HAP-1 (cell line): ENCODE measurements at regions of chr5 and their contacts with region 1.

Region 1: DNA sequence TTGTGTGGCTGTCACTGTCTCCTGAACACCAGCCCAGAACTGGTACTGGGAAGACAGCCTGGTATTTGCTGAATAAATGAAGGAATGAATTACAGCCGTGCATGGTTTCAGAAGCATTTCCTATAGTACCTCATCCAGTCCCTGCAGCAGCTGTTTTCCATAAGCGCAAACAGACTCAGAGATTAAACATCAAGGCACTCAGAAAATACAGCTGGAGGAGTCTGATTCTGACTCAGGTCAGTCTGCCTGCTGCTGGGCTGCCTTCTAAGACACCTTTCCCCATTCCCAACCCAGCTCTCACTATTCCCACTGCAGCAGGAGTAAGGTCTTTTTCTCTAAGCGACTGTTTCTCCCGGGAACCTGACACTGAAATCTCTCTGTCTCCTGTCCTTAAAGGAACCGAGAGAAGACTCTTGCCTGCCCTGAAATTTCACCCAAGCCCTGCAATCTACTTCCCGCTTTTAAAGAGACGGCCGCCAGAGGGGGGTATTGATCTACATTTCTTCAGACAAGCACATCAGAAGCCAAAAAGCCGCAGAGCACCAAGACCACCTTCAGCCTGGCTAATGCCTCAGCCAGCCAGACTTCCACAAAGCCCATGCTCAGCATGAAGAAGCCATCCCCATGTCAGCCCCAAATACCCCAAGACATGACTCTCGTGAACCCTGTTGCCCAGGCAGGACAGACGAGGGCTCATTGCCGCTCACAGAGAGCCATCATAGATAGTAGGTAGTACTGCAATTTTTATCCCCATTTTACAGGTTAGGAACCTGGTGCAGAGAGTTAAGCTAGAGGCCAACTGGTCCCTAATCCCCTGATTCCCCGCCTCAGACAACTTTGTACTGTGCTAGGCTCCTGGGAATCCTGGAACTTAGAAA is 5.4 kb upstream of the FOXI1 start:
- DNase-seq: peak; percentile 74 to 87
- H3K4me3 ChIP-seq: no peak overlapping the region
- H3K4me1 ChIP-seq: no peaks in the 10 kb centered on the region
- H3K27me3 ChIP-seq: no peaks in the 10 kb centered on the region

Region 2: DNA sequence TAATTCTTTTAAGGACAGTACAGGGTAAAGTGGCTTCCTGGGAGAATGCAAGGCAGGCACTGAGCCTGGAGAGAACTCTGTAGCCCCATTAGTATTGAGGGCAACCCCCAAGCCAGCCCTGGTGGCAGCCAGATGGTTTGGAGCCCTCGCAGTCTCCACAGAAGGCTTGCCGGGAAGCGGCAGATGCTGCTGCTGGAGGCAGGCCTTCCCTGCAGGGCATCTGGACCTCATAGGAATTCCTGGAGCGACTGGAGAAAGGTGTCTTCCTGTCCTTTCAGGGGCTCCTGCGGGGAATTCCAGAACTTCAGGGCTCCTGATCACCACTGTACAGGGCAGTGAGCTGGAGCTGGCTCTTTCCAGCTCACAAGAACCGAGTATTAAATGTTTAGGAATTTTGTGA is 287.5 kb before region 1 on chr5:
- in situ Hi-C with region 1: no loop called
- DNase-seq: no peak
- H3K4me3 ChIP-seq: no peak overlapping the region
- H3K4me1 ChIP-seq: no peaks in the 10 kb centered on the region
- H3K27me3 ChIP-seq: no peaks in the 10 kb centered on the region

Region 3: GRCh38 chr5:170216266-170216864 is 116.1 kb after region 1 on chr5:
- in situ Hi-C with region 1: loop called (anchors 10 kb)
- DNase-seq: peak; percentile 45 to 48
- H3K4me3 ChIP-seq: no peak overlapping the region
- H3K4me1 ChIP-seq: peaks cover 10% of the 10 kb centered on the region
- H3K27me3 ChIP-seq: peaks cover 19% of the 10 kb centered on the region

Region 4: DNA sequence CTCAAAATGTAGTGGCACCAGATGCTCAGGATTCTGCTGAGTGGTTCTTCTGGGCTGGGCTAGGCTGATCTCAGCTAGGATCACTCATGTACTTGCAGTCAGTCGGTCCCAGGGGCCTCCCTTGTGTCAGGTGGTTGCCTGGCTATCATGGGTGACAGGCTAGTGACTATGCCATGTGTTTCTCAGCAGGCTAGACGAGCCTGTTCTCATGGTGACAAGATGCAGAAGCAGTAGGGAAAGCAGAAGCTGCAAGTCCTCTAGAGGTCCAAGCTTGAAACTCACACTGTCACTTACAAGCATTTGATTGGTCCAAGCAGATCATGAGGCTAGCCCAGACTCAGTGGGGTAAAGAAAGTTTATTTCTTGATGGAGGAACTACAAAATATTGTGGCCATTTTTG is 304.1 kb after region 1 on chr5:
- in situ Hi-C with region 1: no loop called
- DNase-seq: no peak
- H3K4me3 ChIP-seq: no peak overlapping the region
- H3K4me1 ChIP-seq: peaks cover 7% of the 10 kb centered on the region
- H3K27me3 ChIP-seq: no peaks in the 10 kb centered on the region

Region 5: GRCh38 chr5:170420780-170421412 is 320.6 kb after region 1 on chr5:
- in situ Hi-C with region 1: loop called (anchors 10 kb)
- DNase-seq: peak; percentile 57 to 80
- H3K4me3 ChIP-seq: no peak overlapping the region
- H3K4me1 ChIP-seq: no peaks in the 10 kb centered on the region
- H3K27me3 ChIP-seq: peaks cover 17% of the 10 kb centered on the region

Region 6: DNA sequence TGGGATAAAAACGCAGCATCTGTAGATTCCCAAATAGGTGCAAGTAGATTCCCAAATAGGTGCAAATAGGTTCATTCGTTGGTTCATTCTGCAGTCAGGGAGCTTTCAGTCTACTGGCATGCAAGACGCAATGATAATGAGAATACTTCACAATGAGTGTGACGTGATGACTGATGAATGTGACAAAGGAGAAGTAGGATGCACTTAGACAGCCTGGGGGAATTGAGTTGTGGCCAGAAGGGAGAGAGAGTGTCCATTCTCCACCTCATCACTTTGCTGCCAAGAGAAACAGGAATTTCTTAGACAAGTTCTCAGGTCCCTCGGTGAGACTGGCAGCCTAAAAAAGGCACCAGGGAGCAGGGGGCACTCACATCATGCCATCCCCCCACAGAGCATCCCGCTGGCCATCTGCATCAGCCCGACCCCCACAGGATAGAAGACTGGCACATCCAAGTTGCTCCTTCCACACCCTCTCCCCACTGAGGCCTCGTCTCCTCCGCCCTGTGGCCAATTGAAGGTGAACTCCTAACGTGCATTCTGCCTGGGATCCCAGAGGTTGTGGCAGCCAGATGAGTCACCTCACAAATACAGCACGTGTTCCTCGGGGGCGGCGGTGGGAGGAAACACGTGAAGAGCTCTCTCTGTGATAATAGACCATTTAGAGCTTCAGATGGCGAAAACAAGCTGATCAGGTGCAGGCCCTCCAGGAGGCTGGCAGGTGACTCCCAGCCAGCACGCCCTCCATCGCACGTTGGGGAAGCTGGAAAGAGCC is 383.6 kb after region 1 on chr5:
- in situ Hi-C with region 1: no loop called
- DNase-seq: no peak
- H3K4me3 ChIP-seq: no peak overlapping the region
- H3K4me1 ChIP-seq: no peaks in the 10 kb centered on the region; the same call in 1 of the 2 replicates
- H3K27me3 ChIP-seq: no peaks in the 10 kb centered on the region

Region 7: GRCh38 chr5:170508660-170509322 is 408.5 kb after region 1 on chr5:
- in situ Hi-C with region 1: no loop called
- DNase-seq: peak; percentile 6 to 16
- H3K4me3 ChIP-seq: no peak overlapping the region
- H3K4me1 ChIP-seq: peaks cover 17% of the 10 kb centered on the region
- H3K27me3 ChIP-seq: no peaks in the 10 kb centered on the region

Region 8: DNA sequence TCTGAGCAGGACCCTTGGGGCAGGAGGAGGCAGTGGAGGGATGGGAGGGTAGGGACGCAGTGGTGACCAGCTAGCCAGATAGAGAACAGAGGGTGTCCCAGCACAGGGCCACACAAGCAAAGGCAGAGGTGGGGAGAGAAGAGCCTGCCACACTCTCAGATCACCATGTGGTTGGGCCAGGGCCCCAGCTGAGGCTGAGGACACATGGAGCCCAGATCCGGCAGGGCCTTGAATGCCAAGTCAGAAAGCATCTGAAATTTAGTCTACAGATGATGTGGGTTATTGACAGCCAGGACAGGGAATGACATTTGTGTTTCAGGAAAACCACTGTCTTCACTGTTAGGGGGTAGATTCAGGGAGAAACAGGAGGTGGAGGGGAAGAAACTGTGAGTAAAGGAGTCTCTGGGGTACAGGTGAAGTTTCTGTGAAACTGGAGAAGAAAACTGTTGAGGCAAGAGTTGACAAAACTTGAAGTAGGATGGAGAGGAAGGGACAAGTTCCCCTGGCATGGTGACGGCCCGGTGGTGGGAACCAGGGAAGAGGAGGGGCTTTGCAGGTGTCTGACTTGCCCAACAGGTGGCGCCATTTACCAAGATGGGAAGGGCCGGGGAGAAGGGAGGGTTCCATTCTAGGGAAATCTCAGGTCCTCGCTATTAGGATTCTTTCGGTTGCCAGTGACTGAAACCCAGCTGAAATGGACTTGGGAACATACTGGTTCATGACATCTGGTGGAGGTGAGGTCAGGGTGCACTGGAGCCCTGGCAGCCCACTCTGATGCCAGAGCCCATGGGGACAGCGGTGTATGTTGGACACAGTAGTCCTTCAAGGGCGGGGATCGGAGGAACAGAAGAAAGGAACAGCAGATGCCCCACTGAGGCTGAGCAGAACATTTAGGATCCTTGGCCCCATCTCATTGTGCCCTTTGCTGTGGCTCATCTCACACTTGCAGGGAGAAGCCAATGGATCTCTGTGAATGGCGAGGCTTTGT is 503.6 kb after region 1 on chr5:
- in situ Hi-C with region 1: loop called (anchors 25 kb)
- DNase-seq: peak; percentile 41 to 87
- H3K4me3 ChIP-seq: no peak overlapping the region
- H3K4me1 ChIP-seq: peaks cover 2% of the 10 kb centered on the region
- H3K27me3 ChIP-seq: no peaks in the 10 kb centered on the region